Endothelial cell of umbilical vein (primary cell): ENCODE measurements at regions of chr9 and their contacts with region 1.

Region 1: GRCh38 chr9:89549031-89549644 is 51.2 kb upstream of the SEMA4D start:
- DNase-seq: peak; percentile 74
- H3K4me3 ChIP-seq: no peak overlapping the region
- H3K27ac ChIP-seq: no peak overlapping the region
- H3K4me1 ChIP-seq: no peaks in the 10 kb centered on the region
- H3K27me3 ChIP-seq: peaks cover 0 to 4% of the 10 kb centered on the region in 2 experiments
- CTCF ChIP-seq: peak; percentile 90 to 94
- POLR2A ChIP-seq: no peak

Region 2: GRCh38 chr9:89318123-89319014 is 230.8 kb before region 1 on chr9 and contains the start of gene SECISBP2:
- CTCF ChIA-PET with region 1: interaction called, 39 read pairs
- POLR2A ChIA-PET with region 1: interaction called, 4 read pairs
- dilution Hi-C with region 1: no loop called
- intact Hi-C with region 1: loop called (anchors 1 kb)
- DNase-seq: peak; percentile 98
- H3K4me3 ChIP-seq: peak within 1 kb of the TSS; percentile 58 to 94 (median 84)
- H3K27ac ChIP-seq: peak within 1 kb of the TSS; percentile 100
- H3K4me1 ChIP-seq: peaks cover 36% of the 10 kb centered on the region
- H3K27me3 ChIP-seq: no peaks in the 10 kb centered on the region
- CTCF ChIP-seq: peak; percentile 68 to 78
- POLR2A ChIP-seq: peak; percentile 97
- total RNA-seq, gene SECISBP2: 34.1 and 36.3 TPM in 2 replicates

Region 3: DNA sequence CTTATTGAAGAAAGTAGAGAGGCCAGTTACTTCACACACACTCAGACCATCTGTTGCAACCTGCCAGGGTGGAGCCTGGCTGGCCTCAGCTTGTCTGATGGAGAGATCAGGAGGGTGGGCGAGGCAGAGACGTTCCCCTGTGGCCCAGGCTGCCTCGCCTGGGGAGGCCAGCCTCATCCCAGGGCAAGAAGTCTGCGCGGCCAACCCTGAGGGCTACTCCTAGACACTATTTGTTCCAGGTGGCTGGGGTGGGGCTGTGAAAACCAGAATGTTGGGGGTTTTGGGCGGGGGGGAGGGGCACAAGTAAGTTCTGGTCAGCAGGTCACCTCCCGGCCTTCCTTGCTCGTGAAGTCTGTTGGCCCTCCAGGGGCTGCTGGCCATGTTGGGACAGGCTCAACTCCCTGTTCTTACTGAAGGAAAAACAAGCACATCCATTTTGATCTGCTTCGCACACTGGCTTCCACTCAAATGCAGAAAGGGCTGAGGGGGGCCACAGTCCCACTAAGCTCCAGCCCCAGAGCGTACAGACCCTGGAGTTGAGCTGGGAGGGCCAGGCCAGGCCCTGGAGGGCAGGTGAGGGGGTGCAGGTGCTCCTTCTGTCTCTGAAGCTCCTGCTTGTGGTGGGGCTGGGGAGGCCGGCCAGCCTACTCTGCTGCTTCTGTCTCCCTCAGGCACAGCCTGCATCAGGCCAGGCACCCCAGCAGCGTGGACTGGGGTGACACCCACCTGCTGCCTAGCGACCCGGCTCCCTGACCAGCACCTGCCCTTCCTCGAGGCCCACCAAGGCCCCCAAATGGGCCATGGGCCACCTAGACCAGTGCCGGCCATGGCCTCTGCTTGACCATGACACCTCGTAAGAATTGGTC is 184.2 kb before region 1 on chr9:
- CTCF ChIA-PET with region 1: interaction called, 62 read pairs
- POLR2A ChIA-PET with region 1: no interaction called
- dilution Hi-C with region 1: no loop called
- intact Hi-C with region 1: loop called (anchors 1 kb)
- DNase-seq: no peak
- H3K4me3 ChIP-seq: no peak overlapping the region
- H3K27ac ChIP-seq: no peak overlapping the region
- H3K4me1 ChIP-seq: peaks cover 3% of the 10 kb centered on the region
- H3K27me3 ChIP-seq: no peaks in the 10 kb centered on the region
- CTCF ChIP-seq: no peak
- POLR2A ChIP-seq: no peak

Region 4: GRCh38 chr9:89400403-89401116 is 148.6 kb before region 1 on chr9:
- CTCF ChIA-PET with region 1: interaction called, 14 read pairs
- POLR2A ChIA-PET with region 1: no interaction called
- dilution Hi-C with region 1: no loop called
- intact Hi-C with region 1: no loop called
- DNase-seq: no peak
- H3K4me3 ChIP-seq: no peak overlapping the region
- H3K27ac ChIP-seq: no peak overlapping the region
- H3K4me1 ChIP-seq: no peaks in the 10 kb centered on the region
- H3K27me3 ChIP-seq: no peaks in the 10 kb centered on the region
- CTCF ChIP-seq: no peak
- POLR2A ChIP-seq: no peak

Region 5: DNA sequence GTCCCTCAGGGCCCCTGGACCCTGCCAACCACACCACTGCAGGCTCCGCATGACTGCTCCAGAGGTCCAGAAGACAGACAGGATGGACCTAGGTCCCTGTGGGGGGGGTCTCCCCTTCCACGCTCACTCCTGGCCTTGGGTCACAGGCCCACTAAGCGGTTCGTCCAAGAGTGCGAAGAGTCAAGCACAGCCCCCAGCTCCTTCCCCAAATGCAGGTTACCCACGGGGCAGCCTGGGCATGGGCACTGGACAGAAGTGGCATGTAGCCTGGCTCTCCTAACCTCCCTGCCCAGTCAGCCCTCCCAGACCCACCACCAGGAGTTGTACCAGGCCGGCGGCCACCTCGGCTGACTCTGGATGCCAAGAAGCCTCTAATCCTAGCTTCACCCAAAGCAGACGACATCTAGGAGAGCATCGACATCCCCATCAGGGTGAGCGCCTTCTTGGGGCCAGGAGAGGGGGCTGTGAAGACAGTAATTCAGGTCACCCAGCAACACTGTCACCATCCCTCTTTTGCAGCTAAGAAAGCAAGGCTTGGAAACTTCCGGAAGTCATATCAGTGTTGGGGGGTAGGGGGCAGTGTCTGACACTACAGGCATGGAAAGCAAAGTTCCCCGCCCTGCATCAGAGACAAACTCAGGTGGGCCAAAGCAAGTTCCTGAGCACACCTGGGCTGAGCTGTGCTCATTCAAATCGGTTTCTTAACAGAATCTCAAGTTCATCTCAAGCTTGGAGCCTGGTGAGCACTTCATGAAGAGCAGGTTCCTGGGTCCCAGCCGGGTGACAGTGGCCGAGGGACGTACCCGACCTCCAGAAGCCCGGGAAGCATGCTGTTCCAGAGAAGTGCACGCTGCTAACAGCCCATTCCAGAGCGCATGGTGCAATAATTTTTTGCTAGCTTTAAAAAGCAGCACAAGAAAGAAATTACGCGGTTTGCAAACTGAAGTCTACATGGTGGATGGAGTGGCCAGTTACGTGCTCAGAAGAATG is 119.9 kb before region 1 on chr9:
- CTCF ChIA-PET with region 1: interaction called, 52 read pairs
- POLR2A ChIA-PET with region 1: no interaction called
- dilution Hi-C with region 1: no loop called
- intact Hi-C with region 1: loop called (anchors 1 kb)
- DNase-seq: peak; percentile 6
- H3K4me3 ChIP-seq: no peak overlapping the region
- H3K27ac ChIP-seq: no peak overlapping the region
- H3K4me1 ChIP-seq: peaks cover 14% of the 10 kb centered on the region
- H3K27me3 ChIP-seq: no peaks in the 10 kb centered on the region
- CTCF ChIP-seq: peak; percentile 17 to 29
- POLR2A ChIP-seq: no peak

Region 6: GRCh38 chr9:89519373-89519805 is 29.7 kb before region 1 on chr9:
- CTCF ChIA-PET with region 1: interaction called, 12 read pairs
- POLR2A ChIA-PET with region 1: no interaction called
- dilution Hi-C with region 1: no loop called
- intact Hi-C with region 1: no loop called
- DNase-seq: peak; percentile 33
- H3K4me3 ChIP-seq: no peak overlapping the region
- H3K27ac ChIP-seq: no peak overlapping the region
- H3K4me1 ChIP-seq: peaks cover 16% of the 10 kb centered on the region
- H3K27me3 ChIP-seq: no peaks in the 10 kb centered on the region
- CTCF ChIP-seq: no peak
- POLR2A ChIP-seq: no peak

Region 7: DNA sequence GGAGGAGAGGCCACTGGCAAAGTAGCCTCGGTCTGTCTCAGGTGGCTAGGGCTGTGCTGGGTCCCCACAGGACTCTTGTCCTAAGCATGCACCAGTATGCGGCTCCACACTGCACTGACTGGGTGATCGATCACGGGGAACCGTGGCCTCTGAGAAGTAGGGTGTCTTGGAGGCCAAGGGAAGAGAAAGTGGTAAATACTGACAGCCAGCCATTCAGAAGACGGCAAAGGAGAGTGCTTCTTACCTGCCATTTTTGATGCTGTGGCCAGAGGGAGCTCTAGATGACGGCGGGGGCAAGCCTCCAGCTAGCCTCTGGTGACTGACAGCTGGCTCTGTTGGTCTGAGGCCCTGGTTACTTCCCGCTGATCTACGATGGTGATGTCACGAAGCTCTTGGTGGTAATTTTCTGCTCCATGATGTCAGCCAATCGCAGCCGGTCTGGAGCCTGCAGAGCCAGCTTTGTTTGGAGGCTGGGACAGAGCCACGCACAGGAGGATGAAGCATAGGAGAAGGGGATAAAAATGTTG is 15.3 kb after region 1 on chr9:
- CTCF ChIA-PET with region 1: interaction called, 25 read pairs
- POLR2A ChIA-PET with region 1: no interaction called
- dilution Hi-C with region 1: no loop called
- intact Hi-C with region 1: no loop called
- DNase-seq: peak; percentile 12
- H3K4me3 ChIP-seq: no peak overlapping the region
- H3K27ac ChIP-seq: no peak overlapping the region
- H3K4me1 ChIP-seq: no peaks in the 10 kb centered on the region
- H3K27me3 ChIP-seq: peaks cover 0 to 14% of the 10 kb centered on the region in 2 experiments
- CTCF ChIP-seq: peak in 1 of 2 donors; percentile 42
- POLR2A ChIP-seq: no peak